Gastrocnemius medialis (tissue), 4 donors: ENCODE measurements at regions of chr1 and their contacts with region 1.

Region 1: DNA sequence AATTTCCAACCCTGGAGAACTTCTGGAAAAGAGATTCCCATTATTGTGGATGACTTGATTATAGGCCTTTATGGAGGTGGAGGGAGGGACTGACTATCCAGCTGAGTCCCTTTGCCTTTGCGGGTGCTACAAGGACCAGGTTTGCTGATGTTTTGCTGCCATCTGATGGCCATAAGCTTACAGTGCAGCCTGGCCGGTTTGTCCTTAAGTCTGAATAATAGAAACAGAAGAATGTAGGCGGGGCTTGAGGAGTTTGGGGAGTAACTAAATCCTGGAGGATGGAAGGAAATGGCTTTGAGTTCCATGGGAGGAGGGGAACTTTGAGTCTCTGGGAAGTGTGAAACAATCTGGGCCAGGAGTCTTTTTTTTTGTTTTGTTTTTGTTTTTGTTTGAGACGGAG is 55.7 kb upstream of the CD1D start:
- DNase-seq: peak; percentile 54 to 81
- ATAC-seq: peak; percentile 91 to 96
- H3K4me3 ChIP-seq: no peak overlapping the region
- H3K27ac ChIP-seq: no peak overlapping the region
- H3K4me1 ChIP-seq: no peaks in the 10 kb centered on the region
- H3K27me3 ChIP-seq: peaks cover 0 to 4% (median 0%) of the 10 kb centered on the region in 3 donors
- CTCF ChIP-seq: peak; percentile 83 to 91 (median 88)
- POLR2A ChIP-seq: no peak

Region 2: DNA sequence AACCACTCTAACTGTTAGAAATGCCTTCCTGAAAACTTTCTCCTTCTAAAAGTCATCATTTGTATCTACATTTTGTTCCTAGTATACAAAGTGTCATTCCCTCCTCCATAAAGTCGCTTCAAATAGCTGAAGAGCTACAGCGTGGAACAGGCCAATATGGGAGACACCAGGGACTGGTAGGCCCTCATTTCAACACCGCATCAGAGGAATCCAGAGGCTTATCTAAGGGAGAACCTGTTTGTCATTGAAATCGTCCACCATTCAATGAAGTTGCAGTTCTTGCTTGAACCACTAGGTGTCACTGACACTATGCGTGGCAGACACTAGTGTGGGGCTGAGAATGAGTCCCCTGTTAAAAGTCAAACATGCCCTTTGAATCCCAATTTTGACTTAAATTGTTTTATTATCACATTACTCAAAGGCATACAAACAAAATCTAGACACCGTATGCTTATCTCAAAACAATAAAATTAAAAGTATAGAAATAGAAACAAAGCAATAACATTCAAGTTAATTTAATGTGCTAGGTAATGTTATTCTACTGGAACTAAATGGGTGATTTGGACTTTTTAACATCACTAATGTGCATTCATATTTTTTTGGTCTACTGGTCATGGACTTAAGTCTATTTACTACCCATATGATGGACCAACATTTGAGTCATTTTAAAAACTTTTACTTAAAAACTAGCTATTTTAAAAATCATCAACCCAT is 755.0 kb before region 1 on chr1:
- in situ Hi-C with region 1: no loop called
- intact Hi-C with region 1: loop called (anchors 10 kb)
- DNase-seq: no peak
- ATAC-seq: peak in 1 of 2 donors; percentile 70
- H3K4me3 ChIP-seq: no peak overlapping the region
- H3K27ac ChIP-seq: no peak overlapping the region
- H3K4me1 ChIP-seq: no peaks in the 10 kb centered on the region
- H3K27me3 ChIP-seq: no peaks in the 10 kb centered on the region
- CTCF ChIP-seq: peak; percentile 52 to 90 (median 61)
- POLR2A ChIP-seq: no peak

Region 3: DNA sequence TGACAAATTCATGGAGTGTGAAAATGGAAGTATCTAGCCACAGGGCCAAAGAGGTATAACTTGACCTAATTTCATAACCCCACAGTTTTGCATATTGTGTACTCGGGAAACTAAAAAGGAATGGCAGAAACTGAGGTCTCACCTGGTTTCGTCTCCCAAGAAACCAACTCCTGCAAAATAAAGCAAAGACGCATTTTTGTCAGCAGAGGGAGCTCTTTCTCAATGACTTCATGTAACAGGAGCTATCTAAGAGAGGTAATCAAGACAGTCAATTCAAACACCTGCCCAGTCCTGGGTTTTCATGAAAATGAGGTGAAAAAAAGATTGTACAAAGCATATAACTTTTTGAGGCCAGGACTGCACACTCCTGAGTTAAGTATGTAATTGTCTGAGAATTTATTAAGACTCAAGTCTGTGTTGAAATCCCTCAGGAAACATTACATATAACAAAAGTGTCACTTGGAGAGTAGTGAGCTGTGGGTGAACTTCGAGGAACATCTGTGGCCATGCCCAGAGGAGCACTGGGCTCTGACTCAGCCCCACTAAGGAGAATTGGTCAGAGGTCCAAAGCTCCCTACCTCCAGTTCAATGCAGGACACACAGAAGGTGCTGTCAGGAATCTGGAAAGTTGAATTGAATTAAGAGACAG is 544.7 kb before region 1 on chr1:
- in situ Hi-C with region 1: loop called in 1 of 4 experiments (anchors 25 kb)
- intact Hi-C with region 1: no loop called
- DNase-seq: no peak
- ATAC-seq: no peak
- H3K4me3 ChIP-seq: no peak overlapping the region
- H3K27ac ChIP-seq: no peak overlapping the region
- H3K4me1 ChIP-seq: no peaks in the 10 kb centered on the region
- H3K27me3 ChIP-seq: no peaks in the 10 kb centered on the region
- CTCF ChIP-seq: peak in 4 of 5 experiments; percentile 14 to 46 (median 20)
- POLR2A ChIP-seq: no peak

Region 4: GRCh38 chr1:157963713-157964112 is 161.3 kb before region 1 on chr1:
- in situ Hi-C with region 1: loop called (anchors 5 to 10 kb)
- intact Hi-C with region 1: loop called (anchors 1 kb)
- DNase-seq: peak; percentile 4 to 23
- ATAC-seq: peak; percentile 44 to 54
- H3K4me3 ChIP-seq: no peak overlapping the region
- H3K27ac ChIP-seq: no peak overlapping the region
- H3K4me1 ChIP-seq: peaks cover 0 to under 1% of the 10 kb centered on the region in 2 donors
- H3K27me3 ChIP-seq: peaks cover 0 to 8% (median 8%) of the 10 kb centered on the region in 3 donors
- CTCF ChIP-seq: peak; percentile 38 to 87 (median 78)
- POLR2A ChIP-seq: no peak

Region 5: GRCh38 chr1:157992031-157992832 is 132.8 kb before region 1 on chr1:
- in situ Hi-C with region 1: loop called in 1 of 4 experiments (anchors 10 kb)
- intact Hi-C with region 1: loop called (anchors 1 kb)
- DNase-seq: peak; percentile 48 to 60
- ATAC-seq: peak; percentile 68 to 78
- H3K4me3 ChIP-seq: peak overlapping the region in 2 of 4 donors; percentile 62 to 73
- H3K27ac ChIP-seq: peak overlapping the region; percentile 76 to 84 (median 82)
- H3K4me1 ChIP-seq: peaks cover 0 to 3% of the 10 kb centered on the region in 2 donors
- H3K27me3 ChIP-seq: peaks cover 8 to 22% (median 16%) of the 10 kb centered on the region in 3 donors
- CTCF ChIP-seq: peak; percentile 69 to 87 (median 80)
- POLR2A ChIP-seq: no peak